ENCODE measurements at regions of chr7 and their contacts with region 1.

Region 1: DNA sequence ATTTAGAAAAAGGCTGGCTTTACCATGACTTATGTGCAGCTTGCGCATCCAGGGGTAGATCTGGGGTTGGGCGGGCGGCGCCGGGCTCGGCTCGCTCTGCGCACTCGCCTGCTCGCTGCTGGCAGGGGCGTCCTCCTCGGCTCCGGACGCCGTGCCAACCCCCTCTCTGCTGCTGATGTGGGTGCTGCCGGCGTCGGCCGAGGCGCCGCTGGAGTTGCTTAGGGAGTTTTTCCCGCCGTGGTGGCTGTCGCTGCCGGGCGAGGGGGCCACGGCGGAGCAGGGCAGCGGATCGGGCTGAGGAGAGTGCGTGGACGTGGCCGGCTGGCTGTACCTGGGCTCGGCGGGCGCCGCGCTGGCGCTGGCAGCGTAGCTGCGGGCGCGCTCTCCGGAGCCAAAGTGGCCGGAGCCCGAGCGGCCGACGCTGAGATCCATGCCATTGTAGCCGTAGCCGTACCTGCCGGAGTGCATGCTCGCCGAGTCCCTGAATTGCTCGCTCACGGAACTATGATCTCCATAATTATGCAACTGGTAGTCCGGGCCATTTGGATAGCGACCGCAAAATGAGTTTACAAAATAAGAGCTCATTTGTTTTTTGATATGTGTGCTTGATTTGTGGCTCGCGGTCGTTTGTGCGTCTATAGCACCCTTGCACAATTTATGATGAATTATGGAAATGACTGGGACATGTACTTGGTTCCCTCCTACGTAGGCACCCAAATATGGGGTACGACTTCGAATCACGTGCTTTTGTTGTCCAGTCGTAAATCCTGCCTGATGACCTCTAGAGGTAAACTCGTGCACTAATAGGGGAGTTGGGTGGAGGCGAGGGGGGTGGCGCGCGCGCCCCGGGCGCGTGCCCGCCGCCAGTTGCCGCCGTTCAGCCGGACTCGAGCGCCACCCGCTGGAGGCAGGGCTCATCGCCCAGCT is at the start of gene HOXA5:
- DNase-seq: peak; percentile 97
- H3K4me3 ChIP-seq: peak within 1 kb of the TSS; percentile 29 to 84 (median 65)
- H3K27ac ChIP-seq: peak within 1 kb of the TSS; percentile 82
- H3K4me1 ChIP-seq: peaks cover 73% of the 10 kb centered on the region
- H3K27me3 ChIP-seq: no peaks in the 10 kb centered on the region
- CTCF ChIP-seq: peak; percentile 83 to 96
- POLR2A ChIP-seq: peak; percentile 86
- total RNA-seq, gene HOXA5: 18.8 and 21.4 TPM in 2 replicates

Region 2: DNA sequence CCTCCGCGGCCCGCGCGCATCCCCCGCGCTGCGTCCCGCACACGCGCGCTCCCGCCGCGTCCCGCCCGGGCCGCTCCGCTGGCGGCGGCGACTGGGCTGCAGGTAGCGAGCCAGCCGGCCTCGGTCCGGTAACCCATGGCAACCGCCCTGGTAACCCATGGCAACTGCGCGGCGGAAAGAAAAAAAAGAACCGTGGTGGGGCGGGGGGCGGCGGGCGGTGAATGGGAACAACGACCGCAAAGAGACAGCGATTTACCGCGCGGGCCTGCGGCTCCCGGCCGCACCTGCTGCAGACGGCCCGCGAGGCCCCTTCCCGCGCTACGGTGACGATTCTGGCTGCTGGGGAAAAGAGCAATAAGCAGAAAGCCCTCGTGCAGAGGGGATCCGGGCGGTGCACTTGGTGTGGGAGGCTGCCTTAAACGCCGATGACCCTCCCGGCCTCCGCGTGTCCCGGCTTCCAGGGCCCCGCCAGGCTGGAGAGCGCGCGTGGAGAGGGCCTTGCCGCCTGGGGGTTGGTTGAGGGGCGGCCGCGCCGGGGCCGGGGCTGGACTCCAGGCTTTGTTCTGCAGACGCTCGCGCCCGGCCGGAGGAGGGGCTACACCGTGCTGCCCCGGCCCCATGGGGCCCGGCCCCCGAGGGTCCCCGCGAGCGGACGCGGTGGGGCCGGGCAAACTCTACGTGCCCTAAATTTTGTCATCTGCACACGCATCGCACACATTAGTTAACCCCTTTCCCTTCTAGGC is 766.9 kb before region 1 on chr7:
- CTCF ChIA-PET with region 1: interaction called, 11 read pairs
- POLR2A ChIA-PET with region 1: no interaction called
- dilution Hi-C with region 1: no loop called
- intact Hi-C with region 1: loop called (anchors 1 kb)
- DNase-seq: peak; percentile 74
- H3K4me3 ChIP-seq: peak overlapping the region; percentile 70 to 91 (median 76)
- H3K27ac ChIP-seq: peak overlapping the region; percentile 80
- H3K4me1 ChIP-seq: peaks cover 36% of the 10 kb centered on the region
- H3K27me3 ChIP-seq: no peaks in the 10 kb centered on the region
- CTCF ChIP-seq: no peak
- POLR2A ChIP-seq: peak; percentile 51

Region 3: GRCh38 chr7:26500749-26501352 is 642.4 kb before region 1 on chr7:
- CTCF ChIA-PET with region 1: interaction called, 6 read pairs
- POLR2A ChIA-PET with region 1: no interaction called
- dilution Hi-C with region 1: no loop called
- intact Hi-C with region 1: loop called (anchors 5 kb)
- DNase-seq: peak; percentile 52
- H3K4me3 ChIP-seq: no peak overlapping the region
- H3K27ac ChIP-seq: no peak overlapping the region
- H3K4me1 ChIP-seq: no peaks in the 10 kb centered on the region
- H3K27me3 ChIP-seq: peaks cover 2 to 3% of the 10 kb centered on the region in 2 experiments
- CTCF ChIP-seq: peak; percentile 25 to 29
- POLR2A ChIP-seq: no peak

Region 4: GRCh38 chr7:26853788-26854393 is 289.4 kb before region 1 on chr7:
- CTCF ChIA-PET with region 1: interaction called, 46 read pairs
- POLR2A ChIA-PET with region 1: no interaction called
- dilution Hi-C with region 1: no loop called
- intact Hi-C with region 1: no loop called
- DNase-seq: peak; percentile 69
- H3K4me3 ChIP-seq: no peak overlapping the region
- H3K27ac ChIP-seq: no peak overlapping the region
- H3K4me1 ChIP-seq: peaks cover 34% of the 10 kb centered on the region
- H3K27me3 ChIP-seq: no peaks in the 10 kb centered on the region
- CTCF ChIP-seq: peak; percentile 24 to 26
- POLR2A ChIP-seq: no peak

Region 5: DNA sequence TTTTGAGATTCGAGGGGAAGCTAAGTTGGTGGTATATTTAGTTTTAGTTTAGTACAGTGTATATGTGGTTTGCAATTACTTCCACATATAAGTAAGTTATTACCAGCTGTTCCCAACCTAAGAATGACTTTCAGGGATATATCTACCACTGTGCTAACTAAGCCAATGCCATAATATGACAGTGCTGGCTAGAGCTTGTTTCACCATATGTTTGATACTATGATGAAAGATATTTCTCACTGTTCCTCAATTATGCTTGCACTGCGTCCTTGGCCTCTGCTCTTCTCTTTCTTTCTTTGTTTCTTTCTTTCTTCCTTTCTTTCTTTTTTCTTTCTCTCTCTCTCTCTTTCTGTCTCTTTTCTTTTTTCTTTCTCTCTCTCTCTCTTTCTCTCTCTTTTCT is 165.1 kb before region 1 on chr7:
- CTCF ChIA-PET with region 1: no interaction called
- POLR2A ChIA-PET with region 1: no interaction called
- dilution Hi-C with region 1: no loop called
- intact Hi-C with region 1: no loop called
- DNase-seq: no peak
- H3K4me3 ChIP-seq: no peak overlapping the region
- H3K27ac ChIP-seq: no peak overlapping the region
- H3K4me1 ChIP-seq: no peaks in the 10 kb centered on the region
- H3K27me3 ChIP-seq: no peaks in the 10 kb centered on the region
- CTCF ChIP-seq: no peak
- POLR2A ChIP-seq: no peak

Region 6: GRCh38 chr7:27112955-27113949 is 30.0 kb before region 1 on chr7:
- CTCF ChIA-PET with region 1: interaction called, 13 read pairs
- POLR2A ChIA-PET with region 1: interaction called, 4 read pairs
- dilution Hi-C with region 1: no loop called
- intact Hi-C with region 1: no loop called
- DNase-seq: peak; percentile 92
- H3K4me3 ChIP-seq: peak overlapping the region; percentile 55 to 84 (median 72)
- H3K27ac ChIP-seq: peak overlapping the region; percentile 96
- H3K4me1 ChIP-seq: peaks cover 72% of the 10 kb centered on the region
- H3K27me3 ChIP-seq: no peaks in the 10 kb centered on the region
- CTCF ChIP-seq: no peak
- POLR2A ChIP-seq: peak; percentile 85

Region 7: DNA sequence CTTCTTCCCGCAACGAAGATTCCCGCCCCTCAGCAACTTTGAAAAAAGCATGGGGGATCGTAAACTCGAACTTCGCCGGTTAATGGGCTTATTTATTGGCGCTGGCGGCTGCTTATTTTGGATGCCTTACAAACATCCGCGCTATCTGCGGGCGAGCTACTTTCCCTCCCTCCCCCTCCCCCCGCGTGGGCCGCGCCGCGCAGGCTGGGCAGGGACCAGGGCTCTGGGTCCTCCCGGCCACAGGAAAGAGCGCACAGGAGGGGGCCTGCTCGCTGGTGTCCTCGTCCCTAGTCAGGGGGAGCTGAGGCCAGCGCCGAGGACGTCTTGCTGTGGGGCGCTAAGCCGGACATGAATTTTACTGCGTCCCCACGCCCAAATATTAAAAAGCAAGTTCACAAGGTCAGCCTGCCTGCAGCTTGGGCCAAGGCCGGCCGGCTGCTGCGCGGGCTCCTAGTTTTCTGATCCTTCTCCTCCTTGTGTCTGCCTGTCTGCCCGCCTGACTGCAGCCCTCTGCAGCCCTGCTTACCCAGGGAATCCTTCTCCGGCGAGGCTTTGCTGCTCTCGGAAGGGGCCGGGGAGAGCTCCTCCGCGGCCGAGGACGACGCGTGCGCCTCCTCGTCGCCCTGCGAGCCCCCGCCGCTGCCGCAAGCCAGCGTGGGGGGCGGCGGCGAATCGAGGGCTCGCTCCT is 29.7 kb after region 1 on chr7:
- CTCF ChIA-PET with region 1: interaction called, 42 read pairs
- POLR2A ChIA-PET with region 1: no interaction called
- dilution Hi-C with region 1: no loop called
- intact Hi-C with region 1: no loop called
- DNase-seq: peak; percentile 64
- H3K4me3 ChIP-seq: peak overlapping the region; percentile 35 to 88 (median 59)
- H3K27ac ChIP-seq: peak overlapping the region; percentile 96
- H3K4me1 ChIP-seq: peaks cover 57% of the 10 kb centered on the region
- H3K27me3 ChIP-seq: no peaks in the 10 kb centered on the region
- CTCF ChIP-seq: no peak
- POLR2A ChIP-seq: no peak

Region 8: GRCh38 chr7:27324246-27324645 is 181.0 kb after region 1 on chr7:
- CTCF ChIA-PET with region 1: no interaction called
- POLR2A ChIA-PET with region 1: no interaction called
- dilution Hi-C with region 1: no loop called
- intact Hi-C with region 1: no loop called
- DNase-seq: no peak
- H3K4me3 ChIP-seq: no peak overlapping the region
- H3K27ac ChIP-seq: no peak overlapping the region
- H3K4me1 ChIP-seq: no peaks in the 10 kb centered on the region
- H3K27me3 ChIP-seq: peaks cover 6 to 16% of the 10 kb centered on the region in 2 experiments
- CTCF ChIP-seq: no peak
- POLR2A ChIP-seq: no peak